Naive thymus-derived CD4-positive, alpha-beta T cell (primary cell): ENCODE measurements at regions of chr1 and their contacts with region 1.

Region 1: GRCh38 chr1:150464422-150464826 is 22.8 kb upstream of the TARS2 start:
- DNase-seq: peak; percentile 36 to 76 (median 70)
- ATAC-seq: peak; percentile 90
- H3K4me3 ChIP-seq: no peak overlapping the region
- H3K4me3 Mint-ChIP-seq: peak overlapping the region in 1 of 10 donors; percentile 29
- H3K27ac ChIP-seq: no peak overlapping the region
- H3K27ac Mint-ChIP-seq: peak overlapping the region in 7 of 9 donors; percentile 12 to 86 (median 52)
- H3K4me1 ChIP-seq: no peaks in the 10 kb centered on the region
- H3K4me1 Mint-ChIP-seq: peaks cover 0 to 5% (median 5%) of the 10 kb centered on the region in 7 donors
- H3K27me3 ChIP-seq: no peaks in the 10 kb centered on the region
- H3K27me3 Mint-ChIP-seq: no peaks in the 10 kb centered on the region

Region 2: GRCh38 chr1:150083907-150084306 is 380.5 kb before region 1 on chr1:
- CTCF ChIA-PET with region 1: no interaction called
- POLR2A ChIA-PET with region 1: no interaction called
- intact Hi-C with region 1: no loop called
- DNase-seq: no peak
- ATAC-seq: no peak
- H3K4me3 ChIP-seq: no peak overlapping the region
- H3K4me3 Mint-ChIP-seq: no peak overlapping the region
- H3K27ac ChIP-seq: no peak overlapping the region
- H3K27ac Mint-ChIP-seq: peak overlapping the region in 2 of 9 donors; percentile 0 to 8
- H3K4me1 ChIP-seq: no peaks in the 10 kb centered on the region
- H3K4me1 Mint-ChIP-seq: peaks cover 0 to 10% (median 1%) of the 10 kb centered on the region in 7 donors
- H3K27me3 ChIP-seq: no peaks in the 10 kb centered on the region
- H3K27me3 Mint-ChIP-seq: no peaks in the 10 kb centered on the region

Region 3: DNA sequence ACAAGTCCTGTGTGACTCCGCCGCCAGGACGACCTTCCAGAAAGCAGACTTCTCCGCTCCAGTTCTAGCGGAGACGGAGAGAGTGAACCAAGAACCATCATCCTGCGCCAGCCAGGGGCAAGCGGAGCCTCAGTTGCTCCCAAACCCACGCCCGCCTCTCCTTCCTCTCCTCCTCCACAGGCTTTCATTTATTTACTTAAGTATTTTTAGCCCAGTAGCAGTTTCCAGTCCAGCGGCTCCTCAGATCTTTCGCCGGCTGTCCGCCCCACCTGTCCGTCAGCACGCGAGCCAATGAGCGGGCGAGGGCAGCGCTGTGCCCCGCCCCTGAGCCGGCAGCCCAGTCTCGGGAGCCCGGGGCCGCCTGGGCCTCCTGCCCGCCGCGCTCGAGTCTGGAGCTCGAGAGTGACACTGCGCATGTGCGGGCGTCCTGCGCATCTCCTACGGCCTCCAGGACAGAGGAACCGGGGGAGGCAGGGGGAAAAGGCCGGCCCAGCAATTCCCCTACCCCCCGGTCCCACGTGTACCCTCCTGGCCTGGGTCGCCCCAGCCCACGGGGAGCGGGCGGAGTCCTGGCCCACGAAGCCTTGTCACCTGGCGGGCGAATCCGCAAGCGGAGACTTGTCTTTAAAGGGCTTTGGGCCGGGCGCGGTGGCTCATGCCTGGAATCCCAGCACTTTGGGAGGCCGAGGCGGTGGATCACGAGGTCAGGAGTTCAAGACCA is 51.1 kb after region 1 on chr1 and contains the start of gene FALEC:
- CTCF ChIA-PET with region 1: interaction called, 3 read pairs
- POLR2A ChIA-PET with region 1: no interaction called
- intact Hi-C with region 1: loop called in 1 of 2 experiments (anchors 1 kb)
- DNase-seq: peak; percentile 81 to 94 (median 86)
- ATAC-seq: peak; percentile 99
- H3K4me3 ChIP-seq: peak within 1 kb of the TSS; percentile 58
- H3K4me3 Mint-ChIP-seq: peak within 1 kb of the TSS; percentile 83 to 94 (median 90)
- H3K27ac ChIP-seq: peak within 1 kb of the TSS; percentile 64
- H3K27ac Mint-ChIP-seq: peak within 1 kb of the TSS; percentile 40 to 87 (median 76)
- H3K4me1 ChIP-seq: peaks cover 0 to 6% of the 10 kb centered on the region in 2 donors
- H3K4me1 Mint-ChIP-seq: peaks cover 9 to 17% (median 10%) of the 10 kb centered on the region in 7 donors
- H3K27me3 ChIP-seq: no peaks in the 10 kb centered on the region
- H3K27me3 Mint-ChIP-seq: no peaks in the 10 kb centered on the region
- total RNA-seq, gene FALEC: 0.44 to 2.5 TPM in 2 of 5 experiments, not detected in the others

Region 4: DNA sequence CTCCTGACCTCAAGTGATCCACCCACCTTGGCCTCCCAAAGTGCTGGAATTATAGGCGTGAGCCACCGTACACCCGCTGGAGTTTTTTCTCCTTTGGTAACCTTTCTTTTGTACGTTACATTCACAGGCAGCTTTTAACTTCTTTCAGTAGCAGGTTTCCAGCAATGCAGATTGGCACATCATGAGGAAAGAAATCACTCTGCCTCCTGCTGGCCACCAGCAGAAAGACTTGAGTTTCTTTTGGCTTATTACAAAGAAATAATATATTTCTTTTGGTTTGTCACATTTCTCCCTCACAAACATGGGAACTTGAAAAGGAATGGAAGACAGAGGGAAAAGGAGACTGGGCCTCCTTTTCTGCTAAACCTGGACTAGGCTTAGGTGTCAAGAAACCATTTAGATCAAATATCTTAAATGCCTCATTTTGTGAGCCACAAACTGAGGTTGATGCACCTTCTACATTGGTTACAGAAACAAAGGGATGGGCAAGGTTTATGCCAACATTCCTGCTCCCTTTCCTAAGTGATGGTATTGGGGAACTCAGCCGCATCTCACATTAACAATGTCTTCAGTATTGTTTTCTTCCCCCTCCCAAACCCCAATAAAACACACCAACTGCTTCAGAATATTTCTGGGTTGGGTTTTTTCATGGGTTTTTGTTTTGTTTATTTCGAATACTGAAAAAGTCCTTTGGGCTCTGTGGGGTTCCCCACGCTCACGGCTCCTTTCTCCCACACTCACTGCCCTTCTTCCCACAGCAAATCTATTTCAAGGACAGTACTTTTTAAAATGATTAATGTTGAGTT is 157.3 kb after region 1 on chr1:
- CTCF ChIA-PET with region 1: no interaction called
- POLR2A ChIA-PET with region 1: no interaction called
- intact Hi-C with region 1: loop called (anchors 1 to 2 kb)
- DNase-seq: peak in 7 of 9 donors; percentile 53 to 74 (median 65)
- ATAC-seq: peak; percentile 78
- H3K4me3 ChIP-seq: no peak overlapping the region
- H3K4me3 Mint-ChIP-seq: peak overlapping the region in 8 of 10 donors; percentile 16 to 64 (median 46)
- H3K27ac ChIP-seq: peak overlapping the region; percentile 49
- H3K27ac Mint-ChIP-seq: peak overlapping the region; percentile 48 to 91 (median 83)
- H3K4me1 ChIP-seq: peaks cover 5 to 32% of the 10 kb centered on the region in 2 donors
- H3K4me1 Mint-ChIP-seq: peaks cover 17 to 65% (median 51%) of the 10 kb centered on the region in 7 donors
- H3K27me3 ChIP-seq: no peaks in the 10 kb centered on the region
- H3K27me3 Mint-ChIP-seq: no peaks in the 10 kb centered on the region

Region 5: DNA sequence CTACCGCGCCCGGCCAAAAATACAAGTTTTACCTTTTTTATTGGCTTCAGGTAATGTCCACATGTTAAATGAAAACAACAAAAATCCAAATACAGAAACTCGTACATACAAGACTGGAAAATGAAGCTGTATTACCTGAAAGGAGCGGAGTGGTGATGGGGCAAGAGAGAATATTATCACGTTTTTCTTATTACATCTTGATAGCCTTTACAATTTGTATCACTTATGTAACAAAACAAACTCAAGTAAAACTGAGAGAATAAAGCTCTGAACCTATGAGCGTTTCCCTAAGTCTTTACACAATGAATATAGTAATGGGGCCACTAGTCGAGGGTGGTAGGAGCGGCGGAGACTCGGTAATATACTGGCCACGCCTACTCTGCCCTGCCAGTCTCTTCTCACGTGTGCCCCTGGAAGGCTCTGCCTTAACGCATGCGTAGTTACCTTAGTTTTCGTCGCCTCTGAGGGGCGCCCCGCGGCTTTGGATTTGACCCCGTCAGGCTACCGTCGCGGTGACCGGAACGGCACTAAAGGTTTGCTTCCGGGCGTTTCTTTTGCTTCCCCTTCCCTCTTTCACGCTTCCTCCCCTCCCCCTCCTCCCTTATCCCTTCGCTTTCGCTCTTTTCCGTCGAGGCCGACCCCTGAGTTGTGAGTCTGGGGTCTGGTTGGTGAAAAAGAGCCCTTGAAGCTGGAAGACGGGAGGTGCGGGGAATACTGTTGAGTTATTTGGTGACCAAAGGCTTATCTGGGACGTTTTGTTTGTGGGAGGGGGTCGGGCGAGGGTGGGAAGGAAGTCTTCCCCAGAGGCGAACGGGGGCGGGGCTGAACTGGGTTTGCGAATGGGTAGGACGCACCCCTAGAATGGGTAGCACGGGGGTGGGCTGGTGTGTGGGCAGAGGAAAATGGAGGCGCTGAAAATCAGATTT is 461.7 kb after region 1 on chr1 and contains the start of gene SETDB1:
- CTCF ChIA-PET with region 1: no interaction called
- POLR2A ChIA-PET with region 1: no interaction called
- intact Hi-C with region 1: loop called in 1 of 2 experiments (anchors 1 kb)
- DNase-seq: peak; percentile 69 to 93 (median 90)
- ATAC-seq: peak; percentile 98
- H3K4me3 ChIP-seq: peak within 1 kb of the TSS; percentile 92
- H3K4me3 Mint-ChIP-seq: peak within 1 kb of the TSS; percentile 92 to 97 (median 94)
- H3K27ac ChIP-seq: peak within 1 kb of the TSS; percentile 91
- H3K27ac Mint-ChIP-seq: peak within 1 kb of the TSS; percentile 92 to 99 (median 95)
- H3K4me1 ChIP-seq: peaks cover 0 to 7% of the 10 kb centered on the region in 2 donors
- H3K4me1 Mint-ChIP-seq: peaks cover 15 to 35% (median 27%) of the 10 kb centered on the region in 7 donors
- H3K27me3 ChIP-seq: no peaks in the 10 kb centered on the region
- H3K27me3 Mint-ChIP-seq: no peaks in the 10 kb centered on the region
- total RNA-seq, gene SETDB1: 57.3 to 94.9 (median 61.7) TPM